HepG2 (cell line): ENCODE measurements at regions of chr10 and their contacts with region 1.

Region 1: GRCh38 chr10:20020677-20021076 is 204.4 kb downstream of the PLXDC2 start:
- DNase-seq: no peak
- ATAC-seq: no peak
- H3K4me3 ChIP-seq: no peak overlapping the region
- H3K27ac ChIP-seq: no peak overlapping the region
- H3K4me1 ChIP-seq: no peaks in the 10 kb centered on the region
- H3K27me3 ChIP-seq: no peaks in the 10 kb centered on the region
- CTCF ChIP-seq: no peak
- EP300 ChIP-seq: no peak
- POLR2A ChIP-seq: no peak
- RAD21 ChIP-seq: no peak

Region 2: GRCh38 chr10:18607503-18608378 is 1412.9 kb before region 1 on chr10:
- CTCF ChIA-PET with region 1: no interaction called
- POLR2A ChIA-PET with region 1: no interaction called
- in situ Hi-C with region 1: no loop called
- intact Hi-C with region 1: loop called (anchors 10 kb)
- DNase-seq: peak; percentile 37
- ATAC-seq: no peak
- H3K4me3 ChIP-seq: no peak overlapping the region
- H3K27ac ChIP-seq: no peak overlapping the region
- H3K4me1 ChIP-seq: peaks cover 63% of the 10 kb centered on the region
- H3K27me3 ChIP-seq: no peaks in the 10 kb centered on the region
- CTCF ChIP-seq: no peak
- EP300 ChIP-seq: no peak
- POLR2A ChIP-seq: no peak
- RAD21 ChIP-seq: no peak

Region 3: DNA sequence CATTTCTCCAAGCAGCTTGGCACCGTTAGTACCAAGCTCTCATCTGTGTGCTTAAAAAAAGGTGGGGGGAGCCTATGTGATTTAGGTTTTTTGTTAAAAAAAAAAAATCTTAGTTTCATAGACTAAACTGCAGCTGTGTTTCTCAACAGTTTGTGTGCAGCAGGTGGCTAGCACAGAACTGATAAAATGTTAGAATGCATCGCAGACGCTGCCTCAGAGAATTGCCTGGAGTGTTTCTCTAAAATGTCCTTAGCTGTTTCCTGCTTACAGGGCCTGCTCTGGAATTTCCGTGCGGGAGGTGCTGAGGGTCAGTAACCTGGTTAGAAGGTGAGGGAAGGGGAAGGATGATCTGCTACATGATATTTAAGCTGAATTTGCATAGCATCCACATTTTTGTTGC is 64.4 kb after region 1 on chr10:
- CTCF ChIA-PET with region 1: no interaction called
- POLR2A ChIA-PET with region 1: no interaction called
- in situ Hi-C with region 1: no loop called
- intact Hi-C with region 1: loop called (anchors 10 kb)
- DNase-seq: no peak
- ATAC-seq: no peak
- H3K4me3 ChIP-seq: no peak overlapping the region
- H3K27ac ChIP-seq: no peak overlapping the region
- H3K4me1 ChIP-seq: peaks cover 22% of the 10 kb centered on the region
- H3K27me3 ChIP-seq: no peaks in the 10 kb centered on the region
- CTCF ChIP-seq: no peak
- EP300 ChIP-seq: no peak
- POLR2A ChIP-seq: no peak
- RAD21 ChIP-seq: no peak